CD4-positive, alpha-beta T cell (primary cell): ENCODE measurements at regions of chr13 and their contacts with region 1.

Region 1: GRCh38 chr13:30453727-30454126 is 12.0 kb downstream of the HMGB1 start:
- DNase-seq: peak in 1 of 14 experiments; percentile 19
- ATAC-seq: no peak
- H3K4me3 ChIP-seq: no peak overlapping the region
- H3K4me3 Mint-ChIP-seq: no peak overlapping the region
- H3K27ac ChIP-seq: no peak overlapping the region
- H3K27ac Mint-ChIP-seq: no peak overlapping the region
- H3K4me1 ChIP-seq: no peaks in the 10 kb centered on the region
- H3K4me1 Mint-ChIP-seq: peaks cover 13% of the 10 kb centered on the region
- H3K27me3 ChIP-seq: no peaks in the 10 kb centered on the region
- H3K27me3 Mint-ChIP-seq: no peaks in the 10 kb centered on the region
- CTCF ChIP-seq: no peak

Region 2: GRCh38 chr13:29763436-29764180 is 690.1 kb before region 1 on chr13:
- CTCF ChIA-PET with region 1: no interaction called
- POLR2A ChIA-PET with region 1: no interaction called
- intact Hi-C with region 1: loop called in 1 of 2 experiments (anchors 10 kb)
- DNase-seq: peak in 1 of 14 experiments; percentile 15
- ATAC-seq: peak; percentile 37
- H3K4me3 ChIP-seq: no peak overlapping the region
- H3K4me3 Mint-ChIP-seq: no peak overlapping the region
- H3K27ac ChIP-seq: no peak overlapping the region
- H3K27ac Mint-ChIP-seq: peak overlapping the region; percentile 57
- H3K4me1 ChIP-seq: peaks cover 11% of the 10 kb centered on the region
- H3K4me1 Mint-ChIP-seq: peaks cover 44% of the 10 kb centered on the region
- H3K27me3 ChIP-seq: no peaks in the 10 kb centered on the region
- H3K27me3 Mint-ChIP-seq: no peaks in the 10 kb centered on the region
- CTCF ChIP-seq: no peak

Region 3: DNA sequence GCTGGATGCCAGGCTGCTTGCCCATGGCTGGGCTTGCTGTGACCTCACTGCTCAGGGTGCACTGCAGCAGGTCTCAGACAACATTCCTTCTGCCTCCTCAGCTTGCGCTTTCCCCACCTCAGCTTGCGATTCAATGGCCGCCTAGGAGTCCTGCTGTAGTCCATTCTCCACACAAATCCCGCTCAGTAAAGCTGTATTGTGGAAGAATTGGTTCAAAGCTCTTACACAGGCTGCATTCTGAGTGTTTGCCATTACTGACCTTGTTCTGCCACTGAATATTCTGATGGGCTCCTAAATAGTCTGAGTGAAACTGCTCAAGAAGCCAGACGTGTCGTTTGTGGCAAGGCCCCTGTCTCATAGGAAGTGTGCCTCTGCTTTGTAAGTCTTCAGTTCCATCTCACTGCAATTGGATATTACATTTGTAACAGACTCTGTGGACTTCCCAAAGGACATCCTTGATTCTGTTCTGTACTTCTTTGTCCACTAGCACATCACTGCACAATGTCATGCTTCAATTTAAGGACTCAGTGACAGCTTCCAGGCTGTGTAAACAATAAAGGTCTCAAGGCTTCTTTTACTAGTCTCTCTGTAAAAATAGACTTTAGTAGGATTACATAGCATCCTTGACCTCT is 196.1 kb before region 1 on chr13:
- CTCF ChIA-PET with region 1: no interaction called
- POLR2A ChIA-PET with region 1: no interaction called
- intact Hi-C with region 1: loop called in 1 of 2 experiments (anchors 5 kb)
- DNase-seq: no peak
- ATAC-seq: no peak
- H3K4me3 ChIP-seq: no peak overlapping the region
- H3K4me3 Mint-ChIP-seq: no peak overlapping the region
- H3K27ac ChIP-seq: no peak overlapping the region
- H3K27ac Mint-ChIP-seq: no peak overlapping the region
- H3K4me1 ChIP-seq: peaks cover 3% of the 10 kb centered on the region
- H3K4me1 Mint-ChIP-seq: peaks cover 17% of the 10 kb centered on the region
- H3K27me3 ChIP-seq: no peaks in the 10 kb centered on the region
- H3K27me3 Mint-ChIP-seq: no peaks in the 10 kb centered on the region
- CTCF ChIP-seq: no peak

Region 4: GRCh38 chr13:30408319-30409101 is 45.2 kb before region 1 on chr13:
- CTCF ChIA-PET with region 1: interaction called, 3 read pairs
- POLR2A ChIA-PET with region 1: no interaction called
- intact Hi-C with region 1: loop called in 1 of 2 experiments (anchors 10 kb)
- DNase-seq: peak; percentile 83 to 96 (median 88)
- ATAC-seq: peak; percentile 91
- H3K4me3 ChIP-seq: peak overlapping the region; percentile 37
- H3K4me3 Mint-ChIP-seq: peak overlapping the region; percentile 76
- H3K27ac ChIP-seq: peak overlapping the region in 1 of 2 donors; percentile 76
- H3K27ac Mint-ChIP-seq: peak overlapping the region; percentile 78
- H3K4me1 ChIP-seq: peaks cover 20% of the 10 kb centered on the region
- H3K4me1 Mint-ChIP-seq: peaks cover 40% of the 10 kb centered on the region
- H3K27me3 ChIP-seq: no peaks in the 10 kb centered on the region
- H3K27me3 Mint-ChIP-seq: no peaks in the 10 kb centered on the region
- CTCF ChIP-seq: peak; percentile 63

Region 5: GRCh38 chr13:30422054-30422839 is 31.5 kb before region 1 on chr13 and contains the start of gene UBE2L5:
- CTCF ChIA-PET with region 1: interaction called, 3 read pairs
- POLR2A ChIA-PET with region 1: interaction called, 3 read pairs
- intact Hi-C with region 1: loop called in 1 of 2 experiments (anchors 5 kb)
- DNase-seq: peak in 13 of 14 experiments; percentile 40 to 88 (median 60)
- ATAC-seq: peak; percentile 93
- H3K4me3 ChIP-seq: peak within 1 kb of the TSS; percentile 60
- H3K4me3 Mint-ChIP-seq: peak within 1 kb of the TSS; percentile 91
- H3K27ac ChIP-seq: peak within 1 kb of the TSS in 1 of 2 donors; percentile 46
- H3K27ac Mint-ChIP-seq: peak within 1 kb of the TSS; percentile 83
- H3K4me1 ChIP-seq: peaks cover 12% of the 10 kb centered on the region
- H3K4me1 Mint-ChIP-seq: peaks cover 26% of the 10 kb centered on the region
- H3K27me3 ChIP-seq: no peaks in the 10 kb centered on the region
- H3K27me3 Mint-ChIP-seq: no peaks in the 10 kb centered on the region
- CTCF ChIP-seq: no peak
- total RNA-seq, gene UBE2L5: 0.11 TPM in 1 of 2 experiments, not detected in the other